MCF 10A (cell line): ENCODE measurements at regions of chr10 and their contacts with region 1.

Region 1: GRCh38 chr10:112949875-112950507 is at the start of gene TCF7L2:
- DNase-seq: peak; percentile 99
- H3K4me3 Mint-ChIP-seq: peak within 1 kb of the TSS; percentile 76
- H3K27ac Mint-ChIP-seq: peak within 1 kb of the TSS; percentile 87
- H3K4me1 Mint-ChIP-seq: peaks cover 13% of the 10 kb centered on the region
- H3K27me3 Mint-ChIP-seq: no peaks in the 10 kb centered on the region
- CTCF ChIP-seq: no peak
- total RNA-seq, gene TCF7L2: 25.2 and 25.7 TPM in 2 replicates

Region 2: GRCh38 chr10:112721080-112721698 is 228.8 kb before region 1 on chr10:
- CTCF ChIA-PET with region 1: interaction called, 3 read pairs
- POLR2A ChIA-PET with region 1: interaction called, 4 read pairs
- intact Hi-C with region 1: loop called (anchors 1 kb)
- DNase-seq: peak; percentile 71
- H3K4me3 Mint-ChIP-seq: no peak overlapping the region
- H3K27ac Mint-ChIP-seq: no peak overlapping the region
- H3K4me1 Mint-ChIP-seq: peaks cover 7% of the 10 kb centered on the region
- H3K27me3 Mint-ChIP-seq: no peaks in the 10 kb centered on the region
- CTCF ChIP-seq: peak; percentile 78

Region 3: GRCh38 chr10:112775381-112775780 is 174.6 kb before region 1 on chr10:
- CTCF ChIA-PET with region 1: no interaction called
- POLR2A ChIA-PET with region 1: no interaction called
- intact Hi-C with region 1: no loop called
- DNase-seq: no peak
- H3K4me3 Mint-ChIP-seq: no peak overlapping the region
- H3K27ac Mint-ChIP-seq: no peak overlapping the region
- H3K4me1 Mint-ChIP-seq: no peaks in the 10 kb centered on the region
- H3K27me3 Mint-ChIP-seq: no peaks in the 10 kb centered on the region
- CTCF ChIP-seq: no peak

Region 4: GRCh38 chr10:112898540-112899395 is 51.2 kb before region 1 on chr10:
- CTCF ChIA-PET with region 1: no interaction called
- POLR2A ChIA-PET with region 1: no interaction called
- intact Hi-C with region 1: no loop called
- DNase-seq: no peak
- H3K4me3 Mint-ChIP-seq: no peak overlapping the region
- H3K27ac Mint-ChIP-seq: no peak overlapping the region
- H3K4me1 Mint-ChIP-seq: peaks cover under 1% of the 10 kb centered on the region
- H3K27me3 Mint-ChIP-seq: no peaks in the 10 kb centered on the region
- CTCF ChIP-seq: no peak

Region 5: GRCh38 chr10:112915590-112916572 is 34.1 kb before region 1 on chr10:
- CTCF ChIA-PET with region 1: interaction called, 3 read pairs
- POLR2A ChIA-PET with region 1: interaction called, 11 read pairs
- intact Hi-C with region 1: no loop called
- DNase-seq: peak; percentile 87
- H3K4me3 Mint-ChIP-seq: peak overlapping the region; percentile 40
- H3K27ac Mint-ChIP-seq: peak overlapping the region; percentile 92
- H3K4me1 Mint-ChIP-seq: peaks cover 46% of the 10 kb centered on the region
- H3K27me3 Mint-ChIP-seq: no peaks in the 10 kb centered on the region
- CTCF ChIP-seq: no peak

Region 6: DNA sequence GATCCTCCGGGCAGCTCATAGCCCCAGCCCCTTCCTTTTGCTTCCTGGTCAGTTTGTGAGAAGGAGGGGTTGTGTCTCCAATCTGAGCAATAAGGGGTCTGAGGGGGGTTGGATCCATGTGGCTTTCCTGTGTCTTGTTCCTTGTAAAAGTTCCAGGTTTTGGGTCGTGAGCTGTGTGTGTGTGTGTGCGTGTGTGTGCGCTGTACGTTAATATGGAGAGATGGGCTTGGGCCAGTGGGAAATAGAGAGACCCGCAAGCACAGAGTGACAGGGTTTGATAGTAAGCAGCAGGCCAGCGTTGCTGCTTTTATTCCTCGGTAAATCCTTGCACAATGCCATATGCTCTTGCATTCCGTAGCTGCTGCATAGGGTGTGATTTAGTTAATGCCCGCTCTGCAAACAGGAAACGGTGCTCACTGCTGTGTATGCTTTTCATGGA is 108.6 kb after region 1 on chr10:
- CTCF ChIA-PET with region 1: no interaction called
- POLR2A ChIA-PET with region 1: interaction called, 37 read pairs
- intact Hi-C with region 1: loop called (anchors 2 kb)
- DNase-seq: peak; percentile 78
- H3K4me3 Mint-ChIP-seq: no peak overlapping the region
- H3K27ac Mint-ChIP-seq: no peak overlapping the region
- H3K4me1 Mint-ChIP-seq: peaks cover 15% of the 10 kb centered on the region
- H3K27me3 Mint-ChIP-seq: no peaks in the 10 kb centered on the region
- CTCF ChIP-seq: no peak

Region 7: GRCh38 chr10:113099431-113100293 is 149.7 kb after region 1 on chr10:
- CTCF ChIA-PET with region 1: interaction called, 3 read pairs
- POLR2A ChIA-PET with region 1: interaction called, 11 read pairs
- intact Hi-C with region 1: no loop called
- DNase-seq: peak; percentile 86
- H3K4me3 Mint-ChIP-seq: peak overlapping the region; percentile 32
- H3K27ac Mint-ChIP-seq: peak overlapping the region; percentile 53
- H3K4me1 Mint-ChIP-seq: peaks cover 15% of the 10 kb centered on the region
- H3K27me3 Mint-ChIP-seq: no peaks in the 10 kb centered on the region
- CTCF ChIP-seq: no peak

Region 8: GRCh38 chr10:113126229-113127201 is 176.5 kb after region 1 on chr10:
- CTCF ChIA-PET with region 1: interaction called, 6 read pairs
- POLR2A ChIA-PET with region 1: no interaction called
- intact Hi-C with region 1: loop called (anchors 1 kb)
- DNase-seq: peak; percentile 71
- H3K4me3 Mint-ChIP-seq: peak overlapping the region; percentile 59
- H3K27ac Mint-ChIP-seq: no peak overlapping the region
- H3K4me1 Mint-ChIP-seq: peaks cover 7% of the 10 kb centered on the region
- H3K27me3 Mint-ChIP-seq: no peaks in the 10 kb centered on the region
- CTCF ChIP-seq: peak; percentile 78

Region 9: DNA sequence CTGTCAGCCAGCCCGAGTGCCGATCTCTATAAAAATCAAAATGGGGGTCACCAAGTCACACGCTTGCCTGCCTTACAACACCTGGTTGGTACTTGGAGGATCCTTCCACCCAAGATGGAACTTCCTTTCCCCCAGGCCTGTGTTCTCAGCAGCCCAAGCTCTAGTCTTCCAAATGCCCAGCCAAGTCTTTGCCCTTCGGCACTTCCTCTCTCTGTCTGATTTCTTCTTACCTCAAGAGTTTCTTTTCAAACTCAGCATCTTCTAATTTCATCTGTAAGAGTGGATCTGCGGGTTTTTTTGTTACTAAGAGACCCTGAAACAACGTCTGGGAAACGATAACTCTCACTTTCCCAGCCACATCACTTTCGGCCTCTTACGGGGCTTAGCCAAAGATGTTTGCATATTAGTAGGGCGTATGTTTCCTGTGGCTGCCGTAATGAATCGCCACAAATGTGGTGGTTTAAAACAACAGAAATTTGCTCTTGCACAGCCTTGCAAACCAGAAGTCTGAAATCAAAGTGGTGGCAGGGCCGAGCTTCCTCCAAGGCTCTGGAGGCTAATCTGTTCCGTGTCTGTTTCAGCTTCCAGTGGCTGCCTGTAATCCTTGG is 220.0 kb after region 1 on chr10:
- CTCF ChIA-PET with region 1: no interaction called
- POLR2A ChIA-PET with region 1: no interaction called
- intact Hi-C with region 1: no loop called
- DNase-seq: no peak
- H3K4me3 Mint-ChIP-seq: no peak overlapping the region
- H3K27ac Mint-ChIP-seq: no peak overlapping the region
- H3K4me1 Mint-ChIP-seq: no peaks in the 10 kb centered on the region
- H3K27me3 Mint-ChIP-seq: no peaks in the 10 kb centered on the region
- CTCF ChIP-seq: no peak

Region 10: DNA sequence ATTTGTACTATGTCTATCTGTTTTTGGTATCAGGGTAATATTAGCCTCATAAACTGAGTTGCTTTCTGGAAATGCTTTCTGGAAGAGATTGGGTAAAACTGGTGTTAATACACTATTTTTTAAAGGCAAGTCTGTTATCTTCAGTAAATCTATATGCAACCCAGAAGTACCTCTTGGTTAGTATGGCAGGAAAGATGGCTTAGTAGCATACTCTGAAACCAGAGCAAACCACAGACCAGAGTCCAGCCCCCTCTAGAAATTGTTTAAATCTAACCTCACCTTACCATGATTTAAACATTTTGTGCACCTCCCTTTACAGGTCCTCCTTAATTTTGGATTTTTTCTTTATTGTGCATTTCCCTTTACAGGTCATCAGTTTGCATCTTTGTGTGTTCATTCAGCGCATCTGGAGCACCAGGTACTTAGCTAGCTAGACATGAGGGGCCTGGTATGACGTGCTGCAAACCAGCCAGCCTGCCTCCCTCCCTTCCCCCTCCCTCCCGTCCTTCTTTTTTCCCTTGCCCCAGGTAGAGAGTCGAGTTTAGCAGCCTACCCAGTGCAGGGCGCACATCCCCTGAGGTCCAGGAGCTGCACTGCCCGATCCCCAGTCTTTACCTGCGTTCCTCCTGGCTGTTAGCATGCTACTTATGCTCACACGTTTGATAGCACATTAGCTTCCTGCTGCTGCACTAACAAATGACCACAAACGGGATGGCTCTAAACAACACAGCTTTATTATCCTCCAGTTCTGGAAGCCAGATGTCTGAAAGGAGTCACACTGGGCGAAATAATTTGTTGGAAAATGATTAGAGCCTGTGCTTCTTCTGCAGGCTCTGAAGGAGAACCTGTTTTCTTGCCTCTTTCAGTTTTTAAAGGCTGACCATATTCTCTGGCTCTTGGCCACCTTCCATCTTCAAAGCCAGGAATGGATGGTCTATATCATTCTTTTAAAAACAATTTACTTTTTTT is 302.9 kb after region 1 on chr10:
- CTCF ChIA-PET with region 1: no interaction called
- POLR2A ChIA-PET with region 1: no interaction called
- intact Hi-C with region 1: no loop called
- DNase-seq: no peak
- H3K4me3 Mint-ChIP-seq: no peak overlapping the region
- H3K27ac Mint-ChIP-seq: no peak overlapping the region
- H3K4me1 Mint-ChIP-seq: no peaks in the 10 kb centered on the region
- H3K27me3 Mint-ChIP-seq: peaks cover 87% of the 10 kb centered on the region
- CTCF ChIP-seq: no peak